GM18951 (cell line): ENCODE measurements at regions of chr1 and their contacts with region 1.

Region 1: GRCh38 chr1:180881806-180882509 is 30.7 kb upstream of the KIAA1614 start:
- POLR2A ChIP-seq: no peak

Region 2: DNA sequence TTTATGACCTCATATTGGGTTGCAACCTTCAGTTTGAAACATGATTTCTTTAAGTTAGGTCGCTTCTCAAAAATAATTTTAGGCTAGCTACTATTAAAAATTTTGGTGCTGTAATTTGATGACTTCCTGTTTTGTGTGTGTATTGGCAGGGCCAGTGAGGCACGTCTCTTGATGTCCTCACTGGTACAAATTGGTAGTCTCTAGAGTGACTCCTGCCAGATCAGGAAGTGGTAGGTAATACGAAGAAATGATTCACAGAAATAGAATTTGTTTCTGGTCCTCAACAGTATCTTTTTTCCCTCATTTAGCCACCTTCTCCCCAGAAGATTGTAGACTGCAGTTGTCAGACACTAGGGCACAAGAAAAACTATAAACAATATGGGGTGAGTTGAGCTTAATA is 90.2 kb before region 1 on chr1:
- in situ Hi-C with region 1: no loop called
- POLR2A ChIP-seq: no peak

Region 3: GRCh38 chr1:180912801-180913565 is 31.0 kb after region 1 on chr1 and contains the start of gene KIAA1614:
- in situ Hi-C with region 1: loop called (anchors 5 kb)
- POLR2A ChIP-seq: peak; percentile 56

Region 4: DNA sequence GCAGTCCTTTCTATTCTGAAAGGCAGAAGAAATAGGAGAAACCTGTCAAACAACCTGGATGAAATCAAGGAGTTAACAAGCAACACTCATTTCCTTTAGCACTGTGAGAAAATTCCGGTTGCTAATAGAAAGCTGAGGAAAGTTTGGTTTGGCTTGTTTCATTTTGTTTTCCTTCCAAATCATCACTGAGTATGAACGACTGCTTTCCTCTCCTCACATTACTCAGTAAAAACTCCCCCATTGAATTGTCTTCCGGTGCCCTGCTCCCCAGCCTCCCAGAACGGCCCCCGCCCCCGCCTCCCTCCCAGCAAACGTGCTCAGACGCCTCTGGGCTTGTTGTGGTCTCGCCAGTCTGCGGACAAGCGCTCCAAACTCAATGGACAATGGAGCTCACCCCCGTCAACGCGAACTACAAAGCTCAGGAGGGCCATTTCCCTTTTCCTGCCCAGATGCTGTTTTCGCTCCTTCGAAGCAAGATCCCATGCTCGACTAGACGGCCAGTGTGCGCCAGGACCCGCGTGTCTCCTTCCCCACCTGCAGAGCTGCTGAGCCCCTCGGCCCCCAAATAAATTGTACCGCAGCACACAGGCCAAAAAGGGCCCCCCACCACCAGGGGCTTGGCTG is 140.0 kb after region 1 on chr1:
- in situ Hi-C with region 1: loop called (anchors 10 kb)
- POLR2A ChIP-seq: peak; percentile 34

Region 5: DNA sequence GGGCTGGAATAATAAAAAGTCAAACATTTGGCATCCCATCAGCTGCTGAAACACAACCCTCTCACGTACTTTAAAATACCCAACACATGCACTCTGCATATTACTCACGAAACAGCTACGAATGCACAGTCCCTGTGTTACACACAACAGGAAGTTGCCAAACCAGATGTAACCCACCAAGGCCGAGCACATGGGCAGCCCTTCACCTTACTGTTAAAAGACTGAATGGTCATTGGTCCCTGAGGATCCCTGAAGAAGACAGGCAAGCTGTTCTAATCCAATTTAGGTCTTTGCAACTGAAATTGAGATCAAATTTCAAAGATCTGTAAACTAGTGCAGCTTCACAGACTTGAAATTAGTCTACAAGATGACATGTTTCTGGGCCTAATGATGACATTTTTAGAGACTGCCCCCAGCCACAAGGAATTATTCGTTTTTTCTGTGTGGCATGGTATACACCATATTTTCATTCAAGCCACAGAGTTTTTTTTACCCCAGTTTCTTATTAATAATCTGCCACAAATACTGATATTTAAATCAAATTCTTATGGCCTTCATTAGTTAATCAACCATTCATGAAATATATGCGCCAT is 181.0 kb after region 1 on chr1:
- in situ Hi-C with region 1: no loop called
- POLR2A ChIP-seq: no peak

Region 6: GRCh38 chr1:181073638-181074037 is 191.7 kb after region 1 on chr1:
- in situ Hi-C with region 1: no loop called
- POLR2A ChIP-seq: no peak

Region 7: DNA sequence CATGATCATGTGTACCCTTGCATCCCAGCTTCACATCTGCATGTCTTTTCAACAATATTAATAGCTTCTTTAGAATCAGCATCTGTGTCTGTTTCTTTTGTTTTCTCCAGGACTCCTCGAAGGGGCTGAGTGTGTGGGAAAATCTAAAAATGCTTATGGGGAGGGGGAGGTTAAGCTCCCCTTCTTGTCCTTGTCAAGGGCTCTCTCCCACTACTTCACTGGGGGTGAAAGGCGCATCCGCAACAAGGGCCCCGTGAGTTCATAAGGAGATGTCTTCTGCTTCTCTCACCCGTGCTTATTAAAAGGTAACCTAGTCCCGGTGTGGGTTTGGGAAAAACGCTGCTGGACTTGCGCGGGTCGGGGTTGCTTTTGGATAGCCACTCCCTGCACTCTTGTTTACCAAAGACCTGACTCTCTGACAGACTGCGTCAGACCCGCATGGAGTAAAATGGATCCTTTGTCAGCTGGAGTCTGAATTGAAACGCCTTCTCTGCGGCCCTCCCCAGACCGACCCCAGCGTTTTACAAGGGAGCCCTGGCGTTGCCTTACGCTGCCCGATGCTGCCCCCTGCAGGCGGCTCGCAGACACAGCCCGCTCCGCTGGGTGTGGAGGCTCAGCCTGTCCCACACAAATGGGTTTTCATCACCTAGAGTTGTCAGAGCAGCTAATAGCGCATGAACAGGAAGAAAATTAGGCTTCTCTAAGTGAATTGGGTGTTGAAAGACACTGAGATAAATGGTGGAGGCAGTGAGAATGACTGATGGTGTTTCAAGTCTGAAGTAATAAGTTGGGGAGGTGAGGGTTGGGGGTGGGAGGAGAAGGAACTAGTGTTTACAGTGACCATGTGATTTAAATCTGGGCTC is 260.4 kb after region 1 on chr1:
- in situ Hi-C with region 1: loop called (anchors 10 kb)
- POLR2A ChIP-seq: no peak